Activated T-helper 1 cell treated with anti-CD3 and anti-CD28 coated beads, Interleukin-12 subunit alpha, Interleukin-12 subunit beta, Interleukin-2, Interleukin-4 antibody, amounts not matched to agents 30 ng/mL and 10 ng/mL and 1 ng/mL, durations not matched to agents 14 hours and 24 hours and 36 hours (primary cell): ENCODE measurements at regions of chr1 and their contacts with region 1.

Region 1: DNA sequence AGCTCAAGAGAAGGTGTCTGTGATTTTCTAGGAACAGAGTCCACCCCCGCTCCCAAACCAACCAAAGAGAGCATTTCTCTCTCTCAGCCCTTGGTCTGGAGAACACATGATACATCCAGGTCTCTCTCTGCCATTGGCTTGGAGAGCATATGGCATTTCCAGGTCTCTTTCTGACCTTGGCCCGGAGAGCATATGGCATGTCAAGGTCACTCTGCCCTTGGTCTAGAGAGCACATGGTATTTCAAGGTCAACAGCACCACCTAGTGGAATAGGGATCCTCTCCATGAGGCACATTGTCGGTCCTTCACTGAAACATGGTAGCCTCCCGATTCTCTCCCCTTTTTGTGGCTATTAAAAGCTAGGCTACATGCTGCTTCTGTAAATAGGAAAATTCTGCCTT is 437.7 kb upstream of the OLFM3 start:
- DNase-seq: no peak
- H3K4me3 Mint-ChIP-seq: no peak overlapping the region
- H3K27ac Mint-ChIP-seq: no peak overlapping the region
- H3K4me1 Mint-ChIP-seq: no peaks in the 10 kb centered on the region
- H3K27me3 Mint-ChIP-seq: no peaks in the 10 kb centered on the region

Region 2: GRCh38 chr1:101506541-101507164 is 927.8 kb before region 1 on chr1:
- intact Hi-C with region 1: loop called (anchors 5 kb)
- DNase-seq: peak; percentile 4
- H3K4me3 Mint-ChIP-seq: no peak overlapping the region
- H3K27ac Mint-ChIP-seq: no peak overlapping the region
- H3K4me1 Mint-ChIP-seq: no peaks in the 10 kb centered on the region
- H3K27me3 Mint-ChIP-seq: peaks cover 20% of the 10 kb centered on the region

Region 3: DNA sequence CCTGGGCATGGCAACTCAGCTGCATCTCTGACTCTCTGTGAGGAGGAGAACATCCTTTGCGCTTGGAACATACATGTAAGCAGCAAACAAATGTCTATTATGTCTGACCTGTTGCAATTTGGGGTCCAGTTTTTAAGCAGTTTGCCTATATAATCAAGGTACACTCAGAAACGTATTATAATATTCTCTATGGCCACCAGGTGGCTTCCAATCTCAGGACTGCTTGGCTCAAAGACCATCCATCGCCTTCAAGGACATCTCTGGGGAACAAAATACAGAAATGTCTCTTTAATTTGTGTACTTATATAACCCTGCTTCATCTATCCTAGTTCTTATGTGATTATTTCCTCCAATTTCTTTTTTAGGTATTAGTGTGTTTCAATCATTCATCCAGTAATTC is 664.9 kb before region 1 on chr1:
- intact Hi-C with region 1: loop called (anchors 5 kb)
- DNase-seq: no peak
- H3K4me3 Mint-ChIP-seq: no peak overlapping the region
- H3K27ac Mint-ChIP-seq: no peak overlapping the region
- H3K4me1 Mint-ChIP-seq: no peaks in the 10 kb centered on the region
- H3K27me3 Mint-ChIP-seq: no peaks in the 10 kb centered on the region

Region 4: DNA sequence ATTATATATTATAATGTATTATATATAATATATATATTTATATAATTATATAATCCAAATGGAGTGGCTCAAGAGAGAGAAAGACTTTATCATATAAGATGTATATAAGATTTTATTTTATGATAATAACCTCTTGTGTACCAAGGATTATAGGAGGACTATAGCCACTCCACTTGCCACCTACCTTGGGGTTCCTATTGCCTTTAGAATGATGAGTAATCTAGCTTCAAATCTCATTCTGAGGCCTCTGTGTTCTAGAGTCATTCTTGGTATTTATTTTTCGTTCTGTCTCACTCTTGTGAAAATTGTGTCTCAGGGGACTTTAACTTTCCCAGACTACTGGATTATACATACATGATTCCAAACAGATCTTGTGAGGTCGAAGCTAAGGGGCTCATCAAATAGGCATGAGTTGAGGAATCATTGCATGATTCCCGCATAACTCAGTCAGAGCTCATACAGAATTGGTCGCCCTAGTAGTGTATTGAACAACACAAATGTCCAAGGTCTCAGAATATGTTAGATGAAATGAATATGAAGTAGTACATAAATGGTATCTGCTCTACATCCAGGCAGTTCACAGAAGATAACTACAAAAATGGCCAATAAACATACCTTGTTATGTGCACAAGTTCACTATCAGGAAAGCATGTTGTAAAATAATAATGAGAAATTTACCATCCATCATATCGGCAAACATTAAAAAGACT is 931.6 kb after region 1 on chr1:
- intact Hi-C with region 1: no loop called
- DNase-seq: no peak
- H3K4me3 Mint-ChIP-seq: no peak overlapping the region
- H3K27ac Mint-ChIP-seq: no peak overlapping the region
- H3K4me1 Mint-ChIP-seq: no peaks in the 10 kb centered on the region
- H3K27me3 Mint-ChIP-seq: no peaks in the 10 kb centered on the region